ENCODE measurements at regions of chr3 and their contacts with region 1.

Region 1: DNA sequence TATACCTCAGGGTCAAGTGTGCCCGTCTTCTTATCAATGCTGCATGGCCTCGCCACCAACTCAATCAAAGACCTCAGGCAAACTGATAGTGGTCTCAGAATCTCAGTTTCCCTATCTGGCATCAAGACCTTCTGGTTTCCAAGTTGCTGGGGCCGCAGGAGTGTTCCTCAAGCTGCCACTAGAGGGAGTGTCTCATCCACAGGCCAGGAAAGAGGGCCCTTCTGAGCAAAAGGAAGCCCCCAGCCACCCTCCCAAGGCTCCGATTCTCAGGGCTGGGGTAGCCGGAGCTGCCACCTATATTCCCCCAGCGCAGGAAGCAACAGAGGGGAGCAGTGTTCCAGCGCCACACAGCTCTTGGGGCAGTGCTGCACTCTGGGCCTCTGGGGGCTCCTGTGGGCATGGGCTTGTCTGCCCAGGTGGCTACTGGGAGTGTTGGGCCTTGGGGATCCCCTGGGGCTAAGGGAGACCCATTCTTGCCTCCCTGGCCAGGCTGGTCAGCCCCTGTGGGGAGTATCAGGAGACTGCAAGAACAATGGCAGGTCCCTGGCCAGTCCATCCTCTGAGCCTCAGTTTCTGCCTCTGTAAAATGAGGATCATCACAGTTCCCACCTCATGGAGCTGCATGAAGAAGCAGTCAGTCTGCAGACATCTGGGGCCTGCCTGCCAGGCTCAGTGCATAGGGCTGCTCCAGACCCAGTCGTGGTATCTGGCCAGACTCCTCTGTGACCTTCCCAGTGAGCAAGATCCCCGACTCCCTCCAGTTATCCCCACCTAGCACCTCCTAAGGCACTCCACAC is 23.4 kb upstream of the SEC13 start:
- DNase-seq: peak; percentile 30 to 54 (median 44)
- ATAC-seq: no peak
- H3K4me3 ChIP-seq: no peak overlapping the region
- H3K27ac ChIP-seq: no peak overlapping the region
- H3K4me1 ChIP-seq: no peaks in the 10 kb centered on the region
- H3K27me3 ChIP-seq: no peaks in the 10 kb centered on the region
- CTCF ChIP-seq: peak; percentile 57 to 86 (median 78)
- POLR2A ChIP-seq: no peak

Region 2: DNA sequence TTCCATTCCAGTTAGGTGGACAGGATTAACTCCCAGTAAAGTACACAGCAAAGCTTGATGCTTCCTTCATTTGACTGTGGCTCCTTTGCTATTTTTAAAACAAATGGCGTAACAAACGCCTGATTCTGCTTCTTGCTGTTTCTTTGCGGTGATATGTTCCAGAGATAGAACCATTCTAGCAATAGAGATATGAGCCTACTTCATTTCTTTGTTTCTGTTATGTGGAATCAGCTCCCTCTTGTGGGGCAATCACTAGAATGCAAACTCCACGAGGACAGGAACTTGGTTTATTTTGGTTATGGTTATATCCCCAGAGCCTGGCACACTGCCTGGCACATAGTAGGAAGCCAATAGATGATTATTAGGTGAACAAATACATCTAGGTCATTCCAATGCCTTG is 349.1 kb after region 1 on chr3:
- intact Hi-C with region 1: no loop called
- DNase-seq: no peak
- ATAC-seq: no peak
- H3K4me3 ChIP-seq: no peak overlapping the region
- H3K27ac ChIP-seq: no peak overlapping the region
- H3K4me1 ChIP-seq: no peaks in the 10 kb centered on the region
- H3K27me3 ChIP-seq: no peaks in the 10 kb centered on the region
- CTCF ChIP-seq: no peak
- POLR2A ChIP-seq: no peak

Region 3: DNA sequence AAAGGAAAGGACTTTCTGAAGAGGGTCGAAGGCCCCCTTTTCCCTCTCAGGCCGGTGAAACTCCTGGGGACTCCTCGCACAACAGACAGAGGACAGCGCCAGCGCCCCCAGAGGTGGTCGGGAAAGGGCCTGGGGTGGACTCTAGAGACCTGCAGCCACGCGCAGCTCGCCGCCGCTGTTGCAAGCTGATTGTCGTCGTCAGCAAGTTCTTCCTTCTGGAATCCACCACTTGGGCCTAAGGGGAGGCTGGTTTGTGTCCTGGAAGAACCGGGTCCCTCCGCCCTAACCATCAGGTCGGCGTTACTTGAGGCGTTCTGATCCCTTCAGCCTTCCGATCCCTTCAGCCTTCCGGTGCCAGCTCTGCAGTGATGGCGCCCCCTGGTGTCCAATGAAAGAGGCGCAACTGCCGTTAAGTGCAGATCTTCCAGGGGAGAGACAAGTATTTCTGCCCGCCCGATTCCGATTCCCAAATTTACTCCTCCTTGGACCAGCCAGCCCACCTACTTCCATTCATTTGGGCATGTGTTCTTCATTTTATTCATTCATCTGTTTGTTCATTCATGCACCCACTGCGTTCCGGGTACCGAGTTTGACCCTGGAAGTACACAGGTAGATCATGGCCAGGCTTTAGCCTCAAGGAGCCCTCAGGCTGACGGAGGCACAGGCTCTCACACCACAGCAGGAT is 394.5 kb after region 1 on chr3:
- intact Hi-C with region 1: loop called (anchors 5 kb)
- DNase-seq: peak; percentile 67 to 79 (median 72)
- ATAC-seq: peak; percentile 77
- H3K4me3 ChIP-seq: no peak overlapping the region
- H3K27ac ChIP-seq: no peak overlapping the region
- H3K4me1 ChIP-seq: peaks cover 6% of the 10 kb centered on the region
- H3K27me3 ChIP-seq: no peaks in the 10 kb centered on the region
- CTCF ChIP-seq: peak; percentile 79 to 95 (median 86)
- POLR2A ChIP-seq: no peak

Measured in body of pancreas (tissue), 4 donors.